ENCODE measurements at regions of chr17 and their contacts with region 1.

Region 1: DNA sequence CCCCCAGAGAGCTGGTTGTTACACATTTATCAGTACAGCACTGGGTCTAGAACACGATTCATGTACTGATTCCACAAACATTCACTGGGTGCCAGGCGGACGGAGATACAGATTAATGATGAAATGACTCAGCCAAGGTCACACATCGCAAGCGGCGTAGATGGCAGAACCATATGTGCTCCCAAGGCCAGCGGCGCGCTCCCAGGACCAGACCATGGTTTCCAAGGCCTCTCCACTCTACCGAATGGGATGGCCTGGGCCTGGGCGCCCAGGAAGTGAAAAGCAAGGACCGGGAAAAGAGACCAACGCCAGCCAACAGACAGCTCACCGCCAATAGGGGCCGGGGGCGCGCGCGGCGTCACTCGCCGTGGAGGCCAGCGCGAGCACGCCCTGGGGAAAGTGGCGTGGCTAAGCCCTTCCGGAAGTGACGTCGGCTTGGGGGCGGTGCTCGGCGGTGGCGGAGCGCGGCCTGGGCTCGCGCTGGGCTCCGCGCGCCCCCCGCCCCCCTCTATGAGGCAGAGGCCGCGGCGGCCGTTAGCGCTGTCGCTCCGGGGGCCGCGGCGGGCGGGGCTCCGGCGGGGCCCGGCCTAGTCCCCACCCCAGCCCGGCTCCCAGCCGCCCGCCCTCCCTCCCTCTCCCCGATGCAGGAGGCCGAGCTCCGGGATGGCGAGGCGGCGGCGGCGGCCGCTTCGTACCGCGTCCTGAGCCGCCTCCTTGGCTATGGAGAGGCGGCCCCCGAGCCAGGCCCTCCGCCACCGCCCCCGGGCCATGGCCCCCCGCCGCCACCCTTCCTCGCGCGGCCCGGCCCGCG is at the start of gene SOCS7:
- DNase-seq: peak; percentile 95 to 97
- ATAC-seq: peak; percentile 96 to 98 (median 97)
- H3K4me3 ChIP-seq: peak within 1 kb of the TSS; percentile 78 to 96 (median 94)
- H3K27ac ChIP-seq: peak within 1 kb of the TSS; percentile 52 to 93 (median 87)
- H3K4me1 ChIP-seq: peaks cover 5 to 49% (median 37%) of the 10 kb centered on the region in 9 donors
- H3K27me3 ChIP-seq: no peaks in the 10 kb centered on the region
- CTCF ChIP-seq: no peak
- total RNA-seq, gene SOCS7: 11.2 to 23.8 (median 16.3) TPM

Region 2: GRCh38 chr17:38415250-38416194 is 63.9 kb after region 1 on chr17:
- intact Hi-C with region 1: loop called (anchors 1 to 2 kb)
- DNase-seq: no peak
- ATAC-seq: peak in 6 of 8 donors; percentile 19 to 50 (median 48)
- H3K4me3 ChIP-seq: peak overlapping the region in 5 of 10 donors; percentile 0 to 15 (median 10)
- H3K27ac ChIP-seq: no peak overlapping the region
- H3K4me1 ChIP-seq: peaks cover 4 to 30% (median 15%) of the 10 kb centered on the region in 9 donors
- H3K27me3 ChIP-seq: peaks cover 0 to 46% (median 23%) of the 10 kb centered on the region in 7 donors
- CTCF ChIP-seq: no peak

Region 3: DNA sequence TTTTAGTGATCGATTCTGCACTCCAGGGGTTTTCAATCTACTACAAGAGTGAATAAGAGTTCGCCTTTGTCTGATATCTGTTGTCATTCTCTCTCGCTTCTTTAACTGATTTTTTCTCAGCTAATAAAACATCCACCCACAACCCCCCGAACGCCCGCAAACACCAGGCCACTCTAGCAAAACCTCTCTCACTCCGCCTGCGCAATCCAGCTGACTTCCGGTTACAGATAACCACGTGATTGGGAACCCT is 848.1 kb after region 1 on chr17:
- intact Hi-C with region 1: loop called in 1 of 10 experiments (anchors 10 kb)
- DNase-seq: peak; percentile 82 to 93
- ATAC-seq: peak; percentile 70 to 95 (median 86)
- H3K4me3 ChIP-seq: peak overlapping the region; percentile 77 to 100 (median 92)
- H3K27ac ChIP-seq: peak overlapping the region; percentile 89 to 98 (median 96)
- H3K4me1 ChIP-seq: peaks cover 8 to 70% (median 53%) of the 10 kb centered on the region in 9 donors
- H3K27me3 ChIP-seq: no peaks in the 10 kb centered on the region
- CTCF ChIP-seq: no peak